Stomach (tissue), 19 donors: ENCODE measurements at regions of chr16 and their contacts with region 1.

Region 1: GRCh38 chr16:35559911-35560636 is 2100.7 kb downstream of the TP53TG3F start:
- DNase-seq: no peak
- H3K4me3 ChIP-seq: no peak overlapping the region
- H3K27ac ChIP-seq: no peak overlapping the region
- H3K4me1 ChIP-seq: no peaks in the 10 kb centered on the region
- H3K27me3 ChIP-seq: no peaks in the 10 kb centered on the region
- CTCF ChIP-seq: no peak
- EP300 ChIP-seq: no peak
- POLR2A ChIP-seq: no peak

Region 2: DNA sequence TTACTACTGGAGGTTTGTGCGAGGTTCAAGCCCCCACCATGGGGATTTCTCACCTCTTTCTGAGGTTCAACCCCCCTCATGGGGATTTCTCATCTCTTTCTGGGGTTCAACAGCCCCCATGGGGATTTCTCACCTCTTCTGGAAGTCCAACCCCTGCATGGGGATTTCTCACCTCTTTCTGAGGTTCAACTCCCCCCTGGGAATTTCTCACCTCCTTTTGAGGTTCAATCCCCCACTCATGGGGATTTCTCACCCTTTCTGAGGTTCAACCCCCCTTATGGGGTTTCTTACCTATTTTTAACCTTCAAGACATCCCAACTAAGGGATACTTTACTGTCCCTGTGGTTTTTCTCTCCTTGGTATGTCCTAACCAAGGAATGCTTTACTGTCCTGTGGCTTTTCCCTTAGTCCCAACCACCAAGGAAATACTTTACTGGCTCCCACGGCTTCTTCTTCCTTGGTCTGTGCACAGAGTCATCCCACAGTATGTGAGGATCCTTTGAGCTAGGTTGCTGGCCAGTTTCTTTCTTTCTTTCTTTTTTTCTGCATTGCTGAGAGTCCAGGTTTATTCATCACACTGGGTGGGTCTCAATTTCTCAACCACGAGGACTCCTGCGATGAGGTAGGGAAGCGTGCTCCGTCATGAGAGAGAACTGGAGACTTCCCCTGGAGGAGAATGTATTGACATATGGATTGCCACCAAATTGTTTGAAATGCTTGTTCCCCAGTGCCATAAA is 39.5 kb after region 1 on chr16:
- intact Hi-C with region 1: loop called (anchors 10 kb)
- DNase-seq: no peak
- H3K4me3 ChIP-seq: no peak overlapping the region
- H3K27ac ChIP-seq: no peak overlapping the region
- H3K4me1 ChIP-seq: no peaks in the 10 kb centered on the region
- H3K27me3 ChIP-seq: no peaks in the 10 kb centered on the region
- CTCF ChIP-seq: no peak
- EP300 ChIP-seq: no peak
- POLR2A ChIP-seq: no peak

Region 3: GRCh38 chr16:35631261-35631945 is 71.3 kb after region 1 on chr16:
- intact Hi-C with region 1: no loop called
- DNase-seq: no peak
- H3K4me3 ChIP-seq: no peak overlapping the region
- H3K27ac ChIP-seq: no peak overlapping the region
- H3K4me1 ChIP-seq: no peaks in the 10 kb centered on the region
- H3K27me3 ChIP-seq: no peaks in the 10 kb centered on the region
- CTCF ChIP-seq: no peak
- EP300 ChIP-seq: no peak
- POLR2A ChIP-seq: no peak